ENCODE measurements at regions of chr12 and their contacts with region 1.

Region 1: DNA sequence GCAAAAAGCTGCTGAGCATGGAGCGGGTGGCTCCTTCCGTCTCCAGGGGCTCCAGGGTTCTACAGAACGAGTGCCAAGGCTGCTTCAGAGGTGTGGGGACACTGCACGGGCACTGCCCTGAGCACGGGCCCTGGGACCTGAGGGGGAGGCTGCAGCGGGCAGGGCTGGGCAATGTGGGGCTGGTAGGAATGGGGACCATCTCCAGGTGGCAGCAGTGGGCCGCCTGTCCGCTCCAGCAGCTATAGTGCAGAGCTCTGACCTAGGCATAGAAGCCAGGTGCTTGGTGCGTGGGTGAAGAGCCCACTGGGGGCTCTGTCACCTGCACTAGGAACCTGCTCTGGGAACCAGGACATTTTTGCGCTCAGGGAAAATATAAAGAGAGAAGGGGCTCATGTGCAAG is 22.3 kb downstream of the HDAC7 start:
- DNase-seq: peak in 4 of 10 donors; percentile 52 to 75 (median 58)
- H3K4me3 ChIP-seq: no peak overlapping the region
- H3K27ac ChIP-seq: peak overlapping the region in 4 of 59 donors; percentile 4 to 56 (median 16)
- H3K27me3 ChIP-seq: no peaks in the 10 kb centered on the region
- CTCF ChIP-seq: peak in 54 of 56 donors; percentile 36 to 74 (median 60)

Region 2: DNA sequence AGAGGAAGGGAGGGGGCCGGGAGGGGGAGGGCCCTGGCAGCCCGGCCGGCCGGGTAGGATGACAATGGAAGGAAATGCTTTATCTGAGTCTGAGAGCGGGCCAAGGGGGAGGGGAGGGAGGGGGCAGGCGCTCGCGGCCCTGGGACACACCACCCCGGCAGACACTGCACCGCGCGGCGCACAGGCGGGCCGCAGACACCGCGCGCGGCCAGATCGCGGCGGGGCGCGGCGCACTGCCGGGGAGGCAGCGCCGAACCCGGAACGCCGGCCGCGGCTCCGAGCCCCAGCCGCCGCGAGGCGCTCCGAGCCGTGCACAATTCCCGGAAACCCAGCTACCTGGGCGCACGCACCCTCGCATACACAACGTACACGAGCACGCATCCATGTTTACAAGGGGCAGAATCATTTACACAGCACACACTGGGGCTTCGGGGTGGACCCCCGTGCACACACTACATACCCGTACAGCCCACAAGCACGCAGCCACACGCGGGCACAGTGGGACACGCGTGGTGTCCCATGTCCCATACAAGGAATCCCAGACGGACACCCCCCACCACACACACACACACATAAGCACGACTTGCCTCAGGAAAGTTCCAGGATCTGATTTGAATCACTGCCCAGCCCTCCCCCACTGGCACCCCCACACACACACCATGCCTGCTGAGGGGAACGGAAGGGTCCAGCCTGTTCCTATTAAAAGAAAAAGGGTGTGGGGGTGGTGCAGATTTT is 22.6 kb after region 1 on chr12 and contains the start of gene HDAC7:
- intact Hi-C with region 1: loop called in 1 of 2 experiments (anchors 2 kb)
- DNase-seq: peak; percentile 63 to 84 (median 71)
- H3K4me3 ChIP-seq: peak within 1 kb of the TSS; percentile 55 to 79 (median 69)
- H3K27ac ChIP-seq: peak within 1 kb of the TSS; percentile 50 to 98 (median 94)
- H3K27me3 ChIP-seq: no peaks in the 10 kb centered on the region
- CTCF ChIP-seq: peak in 14 of 56 donors; percentile 2 to 42 (median 18)
- total RNA-seq, gene HDAC7: 25.9 to 77.6 (median 46.8) TPM

Region 3: DNA sequence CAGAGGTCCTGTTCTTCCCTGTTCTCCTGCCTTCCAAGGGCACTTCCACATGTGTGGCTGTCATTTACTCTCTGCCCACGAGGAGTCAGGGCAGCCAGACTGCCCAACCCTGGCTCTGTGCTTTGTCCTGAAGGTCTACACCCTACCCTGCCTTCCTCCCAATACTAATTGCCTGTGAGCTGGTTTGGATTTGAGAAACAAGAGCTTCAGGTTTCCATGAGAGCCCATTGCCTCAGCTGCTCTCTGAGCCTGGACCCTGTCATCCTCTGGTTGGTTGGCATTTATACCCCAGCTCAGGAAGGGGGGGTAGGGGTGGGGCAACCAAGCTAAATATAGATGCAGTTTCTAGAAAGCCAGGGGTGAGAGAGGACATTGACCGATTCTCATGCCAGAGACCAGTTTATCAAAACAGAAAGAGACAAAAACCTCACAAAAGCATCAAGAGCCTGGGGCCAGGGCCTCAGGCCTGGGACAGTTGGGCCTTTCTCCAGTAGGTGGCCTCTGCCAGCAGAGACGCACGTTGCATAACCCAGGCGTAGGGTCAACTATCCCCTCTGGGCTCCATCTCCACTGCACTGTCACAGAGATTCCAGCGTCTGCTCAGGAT is 72.8 kb after region 1 on chr12:
- intact Hi-C with region 1: no loop called
- DNase-seq: no peak
- H3K4me3 ChIP-seq: no peak overlapping the region
- H3K27ac ChIP-seq: no peak overlapping the region
- H3K27me3 ChIP-seq: no peaks in the 10 kb centered on the region
- CTCF ChIP-seq: peak in 14 of 56 donors; percentile 11 to 41 (median 23)

Region 4: DNA sequence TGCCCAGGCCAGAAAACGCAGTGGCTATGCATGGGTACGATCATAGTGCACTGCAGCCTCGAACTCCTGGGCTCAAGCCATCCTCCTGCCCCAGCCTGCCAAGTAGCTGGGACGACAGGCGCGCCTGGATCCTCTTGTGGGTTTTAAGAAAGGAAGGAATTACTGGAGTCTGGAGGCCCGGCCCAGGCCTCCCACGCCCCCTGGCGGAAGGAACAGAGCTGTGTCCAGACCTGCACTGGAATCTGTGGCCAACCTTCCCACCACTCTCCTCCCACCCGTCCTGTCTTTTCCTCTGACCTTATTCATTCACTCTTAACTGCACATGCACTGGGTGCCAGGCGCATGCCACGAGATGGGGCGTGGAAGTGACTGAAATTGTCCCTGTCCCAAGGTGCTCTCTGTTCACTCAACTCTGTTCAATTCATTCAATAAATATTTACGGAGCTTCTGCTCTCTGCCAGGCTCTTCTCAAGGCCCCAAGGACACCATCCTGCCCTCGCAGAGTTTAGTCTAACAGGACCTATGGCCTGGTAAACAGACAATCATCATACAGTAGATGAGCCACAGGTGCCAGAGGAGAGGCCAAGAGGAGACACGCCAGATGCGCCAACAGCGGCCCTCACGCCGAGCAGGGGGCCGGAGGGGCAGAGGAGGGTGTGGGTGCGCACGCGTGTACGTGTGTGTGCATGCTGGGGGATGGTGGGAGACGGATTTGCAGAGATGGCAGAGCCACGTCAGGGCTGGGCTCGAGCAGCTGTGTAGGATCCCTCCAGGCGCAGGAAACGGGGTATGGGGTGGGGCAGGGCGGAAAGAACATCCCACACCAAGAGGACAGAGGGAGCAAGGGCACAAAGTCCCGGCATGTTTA is 152.2 kb after region 1 on chr12:
- intact Hi-C with region 1: loop called in 1 of 2 experiments (anchors 10 kb)
- DNase-seq: peak in 8 of 10 donors; percentile 41 to 70 (median 46)
- H3K4me3 ChIP-seq: no peak overlapping the region
- H3K27ac ChIP-seq: no peak overlapping the region
- H3K27me3 ChIP-seq: peaks cover 0 to 35% (median 0%) of the 10 kb centered on the region in 45 donors
- CTCF ChIP-seq: peak; percentile 19 to 77 (median 67)

Region 5: GRCh38 chr12:48142818-48143674 is 345.6 kb after region 1 on chr12:
- intact Hi-C with region 1: no loop called
- DNase-seq: no peak
- H3K4me3 ChIP-seq: no peak overlapping the region
- H3K27ac ChIP-seq: no peak overlapping the region
- H3K27me3 ChIP-seq: no peaks in the 10 kb centered on the region
- CTCF ChIP-seq: no peak

Measured in dorsolateral prefrontal cortex (tissue), 120 donors.